CD4-positive, alpha-beta T cell (primary cell): ENCODE measurements at regions of chr20 and their contacts with region 1.

Region 1: GRCh38 chr20:37192137-37192854 is 12.9 kb upstream of the MROH8 start:
- DNase-seq: peak; percentile 52 to 84 (median 66)
- ATAC-seq: peak; percentile 80
- H3K4me3 ChIP-seq: no peak overlapping the region
- H3K4me3 Mint-ChIP-seq: peak overlapping the region; percentile 6
- H3K27ac ChIP-seq: no peak overlapping the region
- H3K27ac Mint-ChIP-seq: peak overlapping the region; percentile 21
- H3K4me1 ChIP-seq: peaks cover 70% of the 10 kb centered on the region
- H3K4me1 Mint-ChIP-seq: peaks cover 69% of the 10 kb centered on the region
- H3K27me3 ChIP-seq: no peaks in the 10 kb centered on the region
- H3K27me3 Mint-ChIP-seq: no peaks in the 10 kb centered on the region
- CTCF ChIP-seq: peak; percentile 89

Region 2: DNA sequence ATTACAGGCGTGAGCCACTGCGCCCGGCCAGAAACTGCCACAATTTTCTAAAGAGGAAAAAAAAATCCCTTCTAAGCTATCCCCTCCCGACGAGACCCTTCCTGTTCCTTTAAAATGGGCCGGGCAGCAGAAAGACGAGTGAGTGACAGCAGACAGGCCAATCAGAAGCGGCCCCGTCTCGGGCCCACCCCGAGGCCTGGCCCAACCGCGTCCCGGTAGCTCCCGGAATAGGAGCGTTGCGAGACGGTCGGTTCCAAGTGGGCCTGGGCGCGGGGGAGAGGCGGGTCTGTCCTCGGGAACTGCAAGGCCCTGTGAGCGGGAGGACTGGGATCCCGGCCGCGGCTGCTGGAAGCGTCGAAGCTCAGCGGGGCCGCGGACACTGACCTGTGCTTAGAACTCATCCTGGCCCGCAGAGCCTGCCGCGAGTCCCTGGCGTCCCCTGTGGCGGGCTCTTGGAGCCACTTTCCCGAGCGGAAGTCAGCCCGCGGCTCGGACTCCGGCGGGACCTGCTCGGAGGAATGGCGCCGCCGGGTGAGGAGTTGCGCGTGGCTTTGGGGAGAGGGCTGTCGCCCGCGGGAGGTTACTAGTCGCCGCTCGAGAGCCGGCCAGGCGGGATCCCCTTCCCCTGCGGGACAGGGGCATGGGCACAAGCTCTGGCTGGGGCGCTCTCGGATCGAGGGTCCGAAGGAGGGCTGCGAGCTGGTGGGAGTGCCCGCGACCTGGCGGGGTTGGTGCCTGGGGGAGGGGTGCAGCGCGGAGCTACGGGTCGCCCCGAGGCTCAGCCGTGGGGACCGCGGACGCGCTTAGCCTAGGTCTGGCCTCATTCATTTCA is 13.2 kb before region 1 on chr20 and contains the starts of genes MROH8 and RPN2:
- CTCF ChIA-PET with region 1: interaction called, 27 read pairs
- POLR2A ChIA-PET with region 1: interaction called, 33 read pairs
- intact Hi-C with region 1: loop called in 1 of 2 experiments (anchors 2 kb)
- DNase-seq: peak; percentile 87 to 96 (median 93)
- ATAC-seq: peak; percentile 92
- H3K4me3 ChIP-seq: peak within 1 kb of the TSS; percentile 80
- H3K4me3 Mint-ChIP-seq: peak within 1 kb of the TSS; percentile 99
- H3K27ac ChIP-seq: peak within 1 kb of the TSS; percentile 84 to 90
- H3K27ac Mint-ChIP-seq: peak within 1 kb of the TSS; percentile 88
- H3K4me1 ChIP-seq: peaks cover 40% of the 10 kb centered on the region
- H3K4me1 Mint-ChIP-seq: peaks cover 46% of the 10 kb centered on the region
- H3K27me3 ChIP-seq: no peaks in the 10 kb centered on the region
- H3K27me3 Mint-ChIP-seq: no peaks in the 10 kb centered on the region
- CTCF ChIP-seq: no peak
- total RNA-seq, gene MROH8: 1.1 to 1.2 TPM
- total RNA-seq, gene RPN2: 62.8 to 65.8 TPM

Region 3: DNA sequence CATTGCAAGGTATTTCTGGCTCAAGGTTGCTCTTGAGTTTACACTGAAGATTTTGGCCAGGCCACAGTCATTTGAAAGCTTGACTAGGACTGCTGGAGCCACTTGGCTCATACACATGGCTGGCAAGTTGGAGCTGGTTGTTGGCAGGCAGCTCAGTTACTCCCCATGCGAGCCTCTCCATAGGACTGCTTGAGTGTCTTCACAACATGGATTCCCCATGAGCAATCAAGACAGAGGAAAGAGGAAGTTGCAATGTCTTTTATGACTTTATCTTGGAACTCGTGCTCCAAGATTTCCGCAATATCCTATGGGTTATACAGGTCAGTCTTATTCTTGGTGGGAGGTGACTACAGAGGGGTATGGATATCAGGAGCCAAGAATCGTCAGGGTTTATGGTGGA is 95.8 kb after region 1 on chr20:
- CTCF ChIA-PET with region 1: no interaction called
- POLR2A ChIA-PET with region 1: no interaction called
- intact Hi-C with region 1: loop called in 1 of 2 experiments (anchors 5 kb)
- DNase-seq: peak in 2 of 14 experiments; percentile 43 to 53
- ATAC-seq: no peak
- H3K4me3 ChIP-seq: no peak overlapping the region
- H3K4me3 Mint-ChIP-seq: peak overlapping the region; percentile 98
- H3K27ac ChIP-seq: no peak overlapping the region
- H3K27ac Mint-ChIP-seq: peak overlapping the region; percentile 96
- H3K4me1 ChIP-seq: peaks cover 24% of the 10 kb centered on the region
- H3K4me1 Mint-ChIP-seq: peaks cover 30% of the 10 kb centered on the region
- H3K27me3 ChIP-seq: no peaks in the 10 kb centered on the region
- H3K27me3 Mint-ChIP-seq: peaks cover 9% of the 10 kb centered on the region
- CTCF ChIP-seq: no peak

Region 4: GRCh38 chr20:37356387-37356786 is 164.1 kb after region 1 on chr20:
- CTCF ChIA-PET with region 1: no interaction called
- POLR2A ChIA-PET with region 1: no interaction called
- intact Hi-C with region 1: no loop called
- DNase-seq: peak in 1 of 14 experiments; percentile 23
- ATAC-seq: no peak
- H3K4me3 ChIP-seq: no peak overlapping the region
- H3K4me3 Mint-ChIP-seq: no peak overlapping the region
- H3K27ac ChIP-seq: no peak overlapping the region
- H3K27ac Mint-ChIP-seq: no peak overlapping the region
- H3K4me1 ChIP-seq: peaks cover 5% of the 10 kb centered on the region
- H3K4me1 Mint-ChIP-seq: no peaks in the 10 kb centered on the region
- H3K27me3 ChIP-seq: no peaks in the 10 kb centered on the region
- H3K27me3 Mint-ChIP-seq: no peaks in the 10 kb centered on the region
- CTCF ChIP-seq: no peak

Region 5: DNA sequence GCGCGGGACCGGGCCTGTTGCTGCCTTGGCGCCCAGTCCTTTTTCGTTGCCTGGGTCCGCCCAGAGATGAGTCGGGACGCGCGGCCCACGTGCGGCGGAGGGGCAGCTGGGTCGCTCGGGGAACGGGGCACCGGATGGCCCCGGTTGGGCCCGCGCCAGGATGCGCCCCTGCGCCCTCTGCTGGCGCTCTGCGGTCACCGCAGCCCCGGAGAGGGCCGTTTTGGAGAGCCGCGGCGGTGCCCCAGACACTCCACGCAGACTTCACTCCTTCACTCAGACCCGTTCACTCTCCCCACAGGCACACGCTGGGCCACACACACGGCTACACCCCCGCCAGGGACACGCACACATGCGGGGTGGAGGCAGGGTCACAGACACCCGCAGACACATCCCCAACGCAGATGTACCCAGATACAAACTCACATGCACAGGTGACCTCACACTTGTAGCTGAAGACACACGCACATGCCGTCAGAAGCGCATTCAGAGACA is 192.4 kb after region 1 on chr20:
- CTCF ChIA-PET with region 1: interaction called, 4 read pairs
- POLR2A ChIA-PET with region 1: no interaction called
- intact Hi-C with region 1: loop called (anchors 2 kb)
- DNase-seq: peak; percentile 46 to 87 (median 76)
- ATAC-seq: peak; percentile 96
- H3K4me3 ChIP-seq: peak overlapping the region; percentile 45
- H3K4me3 Mint-ChIP-seq: peak overlapping the region; percentile 89
- H3K27ac ChIP-seq: no peak overlapping the region
- H3K27ac Mint-ChIP-seq: peak overlapping the region; percentile 39
- H3K4me1 ChIP-seq: peaks cover 9% of the 10 kb centered on the region
- H3K4me1 Mint-ChIP-seq: peaks cover 7% of the 10 kb centered on the region
- H3K27me3 ChIP-seq: no peaks in the 10 kb centered on the region
- H3K27me3 Mint-ChIP-seq: no peaks in the 10 kb centered on the region
- CTCF ChIP-seq: peak; percentile 79

Region 6: DNA sequence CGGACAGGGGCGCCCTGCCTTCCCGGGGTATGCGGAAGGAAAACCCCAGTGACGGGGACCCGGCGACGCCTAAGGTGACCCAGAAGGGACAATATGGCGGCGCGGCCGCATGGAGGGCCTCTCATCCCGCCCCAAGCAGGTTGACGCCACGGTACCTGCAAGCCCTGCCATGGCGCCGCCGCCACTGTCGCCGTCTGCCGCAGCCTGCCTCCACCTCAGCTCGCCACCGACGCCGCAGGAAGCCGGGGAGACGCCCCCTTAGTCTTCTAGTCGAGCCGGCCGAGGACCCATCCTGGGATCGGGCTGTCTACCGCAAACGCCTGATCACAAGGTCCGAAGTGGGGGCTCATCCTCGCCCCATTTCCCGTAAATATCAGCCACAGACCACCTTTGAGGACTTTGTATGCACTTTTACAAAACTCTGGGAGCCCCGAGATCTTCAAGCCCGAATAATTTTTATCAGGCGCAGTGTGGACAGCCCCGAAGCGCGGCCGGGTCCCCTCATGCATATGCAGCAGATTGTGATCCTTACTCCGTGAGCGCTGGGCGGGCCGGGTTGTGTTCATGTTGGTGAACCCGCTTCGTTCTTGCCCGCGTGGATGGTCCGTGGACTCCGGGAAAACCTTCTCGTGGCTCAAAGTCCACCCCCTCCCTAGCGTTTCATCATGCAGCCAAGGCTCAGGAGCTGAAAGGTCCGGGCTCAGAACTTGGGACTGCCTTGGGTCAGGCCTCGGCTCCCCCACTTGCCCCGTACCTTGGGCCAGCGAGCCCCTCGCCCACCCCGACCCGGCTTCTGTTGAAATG is 335.5 kb after region 1 on chr20 and contains the start of gene BLCAP:
- CTCF ChIA-PET with region 1: interaction called, 6 read pairs
- POLR2A ChIA-PET with region 1: interaction called, 3 read pairs
- intact Hi-C with region 1: loop called in 1 of 2 experiments (anchors 2 kb)
- DNase-seq: peak; percentile 89 to 97 (median 92)
- ATAC-seq: peak; percentile 92
- H3K4me3 ChIP-seq: peak within 1 kb of the TSS; percentile 100
- H3K4me3 Mint-ChIP-seq: peak within 1 kb of the TSS; percentile 94
- H3K27ac ChIP-seq: peak within 1 kb of the TSS; percentile 99
- H3K27ac Mint-ChIP-seq: peak within 1 kb of the TSS; percentile 98
- H3K4me1 ChIP-seq: peaks cover 53% of the 10 kb centered on the region
- H3K4me1 Mint-ChIP-seq: peaks cover 52% of the 10 kb centered on the region
- H3K27me3 ChIP-seq: no peaks in the 10 kb centered on the region
- H3K27me3 Mint-ChIP-seq: no peaks in the 10 kb centered on the region
- CTCF ChIP-seq: no peak
- total RNA-seq, gene BLCAP: 59.4 to 60.1 TPM